AG04449 (cell line): ENCODE measurements at regions of chr5 and their contacts with region 1.

Region 1: DNA sequence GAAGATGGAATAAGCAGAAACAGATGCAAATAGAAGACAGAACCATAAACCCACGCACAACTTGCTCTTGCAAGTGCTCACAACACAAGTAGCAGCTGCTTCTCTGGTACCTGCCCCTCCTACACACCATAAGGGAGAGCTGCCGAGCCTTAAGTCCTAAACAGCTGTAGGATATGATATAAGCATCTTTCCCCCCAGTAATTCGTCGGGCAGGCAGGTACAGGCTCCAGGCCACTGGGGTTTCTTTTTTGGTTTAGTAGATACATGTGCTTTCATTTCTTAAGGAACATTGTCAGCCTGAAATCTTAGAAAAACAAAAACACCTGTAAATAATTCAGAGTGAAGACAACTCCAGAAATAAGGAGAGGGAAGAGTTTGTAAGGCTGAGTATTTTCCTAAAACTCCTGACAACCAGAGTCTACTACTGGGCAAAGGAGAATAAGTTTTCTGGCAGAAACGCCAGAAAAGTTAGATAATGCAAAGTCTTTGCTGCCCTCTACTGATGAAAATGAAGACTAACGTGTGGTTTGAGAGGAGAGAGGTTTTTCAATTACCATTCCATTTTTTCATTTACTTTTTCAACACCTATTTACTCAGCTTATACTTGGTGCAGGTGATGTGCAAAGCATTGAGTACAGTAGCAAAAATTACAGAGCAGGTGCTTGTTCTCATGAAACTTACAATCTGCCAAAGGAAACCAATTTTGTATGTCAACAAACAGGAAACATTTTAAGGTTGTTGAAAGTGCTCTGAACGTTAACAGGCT is 20.1 kb upstream of the TCERG1 start:
- DNase-seq: no peak
- H3K4me3 ChIP-seq: no peak overlapping the region
- CTCF ChIP-seq: peak; percentile 44

Region 2: GRCh38 chr5:146165460-146165859 is 261.6 kb before region 1 on chr5:
- CTCF ChIA-PET with region 1: interaction called, 11 read pairs
- POLR2A ChIA-PET with region 1: interaction called, 3 read pairs
- DNase-seq: no peak
- H3K4me3 ChIP-seq: no peak overlapping the region
- CTCF ChIP-seq: no peak

Region 3: GRCh38 chr5:146203011-146203871 is 223.8 kb before region 1 on chr5 and contains the start of gene RBM27:
- CTCF ChIA-PET with region 1: no interaction called
- POLR2A ChIA-PET with region 1: no interaction called
- DNase-seq: peak; percentile 94
- H3K4me3 ChIP-seq: peak within 1 kb of the TSS; percentile 86
- CTCF ChIP-seq: no peak

Region 4: GRCh38 chr5:146291421-146292074 is 135.5 kb before region 1 on chr5:
- CTCF ChIA-PET with region 1: interaction called, 28 read pairs
- POLR2A ChIA-PET with region 1: no interaction called
- DNase-seq: no peak
- H3K4me3 ChIP-seq: no peak overlapping the region
- CTCF ChIP-seq: peak; percentile 22

Region 5: DNA sequence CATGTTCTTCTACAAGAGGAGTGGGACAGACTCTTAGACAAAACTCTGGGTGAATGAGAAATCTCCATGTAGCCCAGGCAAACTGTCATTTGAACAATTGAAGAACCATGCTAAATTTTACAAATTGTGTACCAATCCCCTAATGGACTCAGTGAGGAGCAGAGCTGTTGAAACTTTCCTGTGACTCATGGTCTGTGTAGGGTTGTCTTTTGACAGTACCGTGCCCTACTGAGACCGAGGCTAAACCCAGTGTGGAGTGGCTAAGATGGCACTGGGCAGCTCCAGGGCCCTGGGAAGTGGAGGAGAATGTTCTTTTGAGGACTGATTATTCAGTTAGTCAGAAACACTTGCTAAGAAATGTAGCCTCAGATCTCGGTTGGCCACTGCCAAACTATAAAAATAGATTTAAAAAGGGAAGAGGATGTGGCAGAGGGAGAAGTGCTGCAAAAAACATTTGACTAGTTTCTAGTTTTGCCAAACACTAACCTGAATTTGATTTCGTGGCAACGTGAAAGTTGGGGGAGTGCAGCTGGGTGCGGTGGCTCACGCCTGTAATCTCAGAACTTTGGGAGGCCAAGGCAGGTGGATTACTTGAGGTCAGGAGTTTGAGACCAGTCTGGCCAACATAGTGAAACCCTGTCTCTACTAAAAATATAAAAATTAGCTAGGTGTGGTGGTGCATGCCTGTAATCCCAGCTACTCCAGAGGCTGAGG is 63.7 kb before region 1 on chr5:
- CTCF ChIA-PET with region 1: no interaction called
- POLR2A ChIA-PET with region 1: no interaction called
- DNase-seq: no peak
- H3K4me3 ChIP-seq: no peak overlapping the region
- CTCF ChIP-seq: no peak

Region 6: GRCh38 chr5:146395193-146395592 is 31.8 kb before region 1 on chr5:
- CTCF ChIA-PET with region 1: no interaction called
- POLR2A ChIA-PET with region 1: no interaction called
- DNase-seq: no peak
- H3K4me3 ChIP-seq: no peak overlapping the region
- CTCF ChIP-seq: no peak

Region 7: GRCh38 chr5:146409054-146409671 is 17.9 kb before region 1 on chr5:
- CTCF ChIA-PET with region 1: interaction called, 19 read pairs
- POLR2A ChIA-PET with region 1: no interaction called
- DNase-seq: peak; percentile 7
- H3K4me3 ChIP-seq: no peak overlapping the region
- CTCF ChIP-seq: no peak

Region 8: GRCh38 chr5:146440870-146441495 is 13.9 kb after region 1 on chr5:
- CTCF ChIA-PET with region 1: interaction called, 28 read pairs
- POLR2A ChIA-PET with region 1: no interaction called
- DNase-seq: no peak
- H3K4me3 ChIP-seq: no peak overlapping the region
- CTCF ChIP-seq: no peak